A549 (cell line): ENCODE measurements at regions of chr17 and their contacts with region 1.

Region 1: DNA sequence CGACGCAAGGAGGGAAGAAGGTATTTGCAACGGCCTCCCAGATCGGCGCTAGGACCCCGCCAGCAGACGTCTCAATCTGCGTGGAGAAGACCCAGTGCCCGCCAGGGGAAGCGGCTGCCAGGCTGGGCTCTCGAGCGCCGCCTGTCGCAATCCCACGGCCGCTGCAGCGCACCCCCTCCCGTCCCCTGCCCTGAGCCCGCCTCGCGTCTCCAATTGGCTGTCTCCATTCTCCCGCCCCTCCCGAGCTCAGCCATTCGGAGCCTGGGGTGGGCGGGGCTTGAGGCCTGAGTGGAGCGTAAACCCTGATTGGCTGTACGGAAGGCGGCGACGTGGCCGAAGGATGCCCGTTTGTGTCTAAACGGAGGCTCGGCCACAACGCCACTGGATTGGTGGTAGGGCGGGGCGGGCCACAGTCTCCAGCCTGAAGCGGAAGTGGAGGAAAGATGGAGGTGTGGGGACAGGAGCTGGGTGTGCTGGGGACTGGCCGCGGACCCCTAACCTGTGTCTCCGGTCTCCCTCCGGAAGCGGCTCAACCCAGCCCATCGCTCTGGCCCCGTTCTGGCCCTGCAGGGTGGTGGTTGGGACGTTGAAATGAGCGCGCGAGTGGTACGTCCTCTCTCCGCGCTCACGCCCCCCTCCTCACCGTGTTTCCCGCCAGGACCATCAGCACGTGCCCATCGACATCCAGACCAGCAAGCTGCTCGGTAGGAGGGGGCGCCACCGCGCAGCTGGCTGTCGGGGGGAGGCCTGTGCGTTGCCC is at the start of gene CDK5RAP3:
- DNase-seq: peak; percentile 96 to 100
- ATAC-seq: peak; percentile 96 to 97
- H3K4me3 ChIP-seq: peak within 1 kb of the TSS; percentile 77
- H3K27ac ChIP-seq: peak within 1 kb of the TSS; percentile 85 to 90
- H3K4me1 ChIP-seq: peaks cover 47% of the 10 kb centered on the region
- CTCF ChIP-seq: peak; percentile 92
- EP300 ChIP-seq: no peak
- POLR2A ChIP-seq: peak; percentile 88
- RAD21 ChIP-seq: peak; percentile 74 to 89
- polyA plus RNA-seq, gene CDK5RAP3: 124 and 179 TPM in 2 replicates

Region 2: DNA sequence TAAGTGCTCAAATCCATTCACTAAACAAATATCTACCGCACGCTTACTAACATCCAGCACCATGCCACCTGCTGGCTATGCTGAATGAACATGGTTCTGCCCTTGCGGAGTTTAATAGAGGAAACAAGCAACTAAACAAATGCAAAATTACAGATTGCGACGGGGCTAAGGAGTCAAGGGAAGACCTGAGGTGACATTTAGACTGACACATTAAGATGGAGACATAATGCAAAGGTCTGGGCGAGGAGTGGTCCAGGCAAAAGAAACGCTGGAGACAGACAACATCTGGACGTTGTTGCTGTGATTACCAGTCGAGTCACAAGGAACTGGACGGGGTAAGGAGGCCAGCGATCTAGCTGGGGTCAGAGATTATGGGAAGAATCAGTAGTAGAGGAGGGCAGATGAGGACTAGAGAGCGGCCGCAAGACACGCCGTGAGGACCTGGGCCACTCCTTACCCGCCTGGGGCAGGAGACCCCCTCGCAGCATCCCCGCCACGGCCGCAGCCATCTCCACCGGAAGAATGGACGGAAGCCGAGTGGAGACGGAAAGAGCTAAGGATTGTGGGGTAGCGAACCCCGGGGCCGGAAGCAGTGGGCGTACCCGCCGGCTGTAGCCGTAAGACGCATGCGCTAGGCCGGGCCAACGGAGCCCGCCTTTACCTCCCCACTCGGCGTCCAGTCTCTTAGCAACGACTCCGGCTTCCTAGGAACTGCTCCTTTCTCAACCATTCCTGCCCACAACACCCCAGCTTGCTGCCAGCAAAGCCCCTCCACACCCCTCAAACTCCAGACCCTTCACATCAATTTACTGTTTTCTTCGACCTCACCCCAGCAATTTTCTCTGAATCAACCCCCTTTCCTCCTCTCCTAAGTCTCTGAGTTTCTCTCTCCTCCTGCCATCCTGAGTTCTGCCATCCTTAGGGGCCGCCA is 139.6 kb before region 1 on chr17 and contains the starts of genes LRRC46 and MRPL10:
- CTCF ChIA-PET with region 1: interaction called, 17 read pairs
- POLR2A ChIA-PET with region 1: interaction called, 10 read pairs
- DNase-seq: peak; percentile 94 to 99
- ATAC-seq: peak; percentile 90 to 95
- H3K4me3 ChIP-seq: peak within 1 kb of the TSS; percentile 60
- H3K27ac ChIP-seq: peak within 1 kb of the TSS; percentile 83 to 88
- H3K4me1 ChIP-seq: peaks cover 16% of the 10 kb centered on the region
- CTCF ChIP-seq: peak; percentile 55
- EP300 ChIP-seq: no peak
- POLR2A ChIP-seq: peak; percentile 96
- RAD21 ChIP-seq: no peak; a peak in 1 of 5 replicates
- polyA plus RNA-seq, gene LRRC46: 1.7 and 2.7 TPM in 2 replicates
- polyA plus RNA-seq, gene MRPL10: 97.7 and 103 TPM in 2 replicates

Region 3: DNA sequence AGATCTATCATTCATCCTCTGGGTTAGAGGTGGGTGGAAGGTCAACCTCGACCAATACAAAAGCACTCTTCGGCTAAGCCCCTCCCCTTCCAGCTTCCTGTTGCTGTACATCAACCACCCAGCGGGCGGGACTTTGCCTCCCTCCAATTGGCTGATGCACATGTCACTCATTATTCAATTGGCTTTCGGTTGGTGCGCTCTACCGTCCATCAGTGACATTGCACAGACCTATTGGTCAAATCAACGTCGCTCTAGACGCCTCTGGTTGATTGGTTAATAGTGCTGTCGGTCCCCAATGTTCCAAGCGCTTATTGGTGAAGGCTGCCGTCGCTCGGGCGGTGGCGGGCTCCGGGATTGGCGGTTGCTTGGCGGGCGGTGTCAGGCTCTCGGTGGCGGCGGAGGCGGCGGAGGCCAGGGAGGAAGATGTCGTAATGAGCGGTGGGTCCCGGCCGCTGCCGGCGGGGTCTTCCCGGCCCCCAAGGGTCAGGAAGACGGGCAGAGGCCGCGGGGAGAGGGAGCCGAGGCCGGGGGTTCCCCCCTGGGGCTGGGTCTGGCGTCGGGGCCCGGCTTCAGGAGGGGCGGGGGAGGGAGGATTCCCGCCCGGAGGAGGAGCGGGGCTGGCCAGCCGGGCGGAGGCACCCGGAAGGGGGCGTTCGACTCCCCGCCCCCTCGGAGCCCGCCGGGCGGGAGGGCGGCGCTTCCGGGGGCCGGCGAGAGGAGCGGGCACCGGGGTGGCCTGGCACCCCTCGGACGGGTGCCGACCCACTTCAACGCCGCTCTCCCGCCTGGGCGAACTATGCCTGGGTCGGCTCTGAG is 74.8 kb before region 1 on chr17 and contains the start of gene SP2:
- CTCF ChIA-PET with region 1: interaction called, 87 read pairs
- POLR2A ChIA-PET with region 1: interaction called, 29 read pairs
- DNase-seq: peak; percentile 100
- ATAC-seq: peak; percentile 88 to 95
- H3K4me3 ChIP-seq: peak within 1 kb of the TSS; percentile 86
- H3K27ac ChIP-seq: peak within 1 kb of the TSS; percentile 95 to 96
- H3K4me1 ChIP-seq: peaks cover 16% of the 10 kb centered on the region; the same call in 2 of the 3 replicates
- CTCF ChIP-seq: no peak
- EP300 ChIP-seq: no peak
- POLR2A ChIP-seq: peak; percentile 91
- RAD21 ChIP-seq: no peak
- polyA plus RNA-seq, gene SP2: 6.2 and 8.0 TPM in 2 replicates

Region 4: DNA sequence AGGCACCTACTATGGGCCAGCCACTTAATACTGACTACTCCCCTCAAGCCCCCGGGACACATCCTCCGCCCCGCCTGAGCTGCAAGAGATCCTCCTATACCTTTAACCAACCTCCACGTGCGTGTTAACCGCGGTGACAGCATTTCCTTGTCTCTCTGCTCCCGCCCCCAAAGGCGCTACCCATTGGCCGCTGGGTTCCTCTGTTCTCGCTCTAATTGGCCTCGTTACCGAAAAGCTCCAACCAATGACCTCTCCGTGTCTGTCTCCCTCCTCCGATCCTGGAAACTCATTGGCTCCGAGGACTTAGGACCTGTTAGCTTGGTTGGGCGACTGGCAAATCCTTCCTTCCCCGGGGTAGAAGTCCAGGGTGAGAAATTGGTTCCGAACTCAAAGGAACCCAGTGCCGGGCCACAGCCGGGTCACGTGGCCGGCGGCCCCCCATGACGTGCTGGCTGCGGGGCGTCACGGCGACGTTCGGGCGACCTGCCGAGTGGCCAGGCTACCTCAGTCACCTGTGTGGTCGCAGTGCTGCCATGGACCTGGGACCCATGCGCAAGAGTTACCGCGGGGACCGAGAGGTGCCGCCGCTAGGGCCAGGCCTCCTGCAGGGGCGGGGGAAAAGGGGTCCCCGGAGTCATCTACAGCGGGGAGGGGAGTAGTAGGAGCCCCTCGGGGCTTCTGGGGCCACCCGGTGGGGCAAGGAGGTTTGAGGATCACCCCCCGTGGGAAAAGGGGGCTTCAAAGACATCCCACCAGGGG is 29.5 kb before region 1 on chr17 and contains the start of gene PNPO:
- CTCF ChIA-PET with region 1: interaction called, 1,426 read pairs
- POLR2A ChIA-PET with region 1: interaction called, 8 read pairs
- DNase-seq: peak; percentile 99 to 100
- ATAC-seq: peak; percentile 97 to 100
- H3K4me3 ChIP-seq: peak within 1 kb of the TSS; percentile 71
- H3K27ac ChIP-seq: peak within 1 kb of the TSS; percentile 87 to 93
- H3K4me1 ChIP-seq: peaks cover 29% of the 10 kb centered on the region
- CTCF ChIP-seq: no peak
- EP300 ChIP-seq: no peak
- POLR2A ChIP-seq: peak; percentile 82
- RAD21 ChIP-seq: no peak
- polyA plus RNA-seq, gene PNPO: 40.8 and 43.4 TPM in 2 replicates

Region 5: GRCh38 chr17:47987240-47987835 is 16.5 kb after region 1 on chr17:
- CTCF ChIA-PET with region 1: interaction called, 174 read pairs
- POLR2A ChIA-PET with region 1: no interaction called
- DNase-seq: no peak
- ATAC-seq: peak in 1 of 2 experiments; percentile 12; a peak in 3 of 6 replicates
- H3K4me3 ChIP-seq: no peak overlapping the region
- H3K27ac ChIP-seq: no peak overlapping the region
- H3K4me1 ChIP-seq: no peaks in the 10 kb centered on the region
- CTCF ChIP-seq: no peak
- EP300 ChIP-seq: no peak
- POLR2A ChIP-seq: no peak
- RAD21 ChIP-seq: no peak

Region 6: DNA sequence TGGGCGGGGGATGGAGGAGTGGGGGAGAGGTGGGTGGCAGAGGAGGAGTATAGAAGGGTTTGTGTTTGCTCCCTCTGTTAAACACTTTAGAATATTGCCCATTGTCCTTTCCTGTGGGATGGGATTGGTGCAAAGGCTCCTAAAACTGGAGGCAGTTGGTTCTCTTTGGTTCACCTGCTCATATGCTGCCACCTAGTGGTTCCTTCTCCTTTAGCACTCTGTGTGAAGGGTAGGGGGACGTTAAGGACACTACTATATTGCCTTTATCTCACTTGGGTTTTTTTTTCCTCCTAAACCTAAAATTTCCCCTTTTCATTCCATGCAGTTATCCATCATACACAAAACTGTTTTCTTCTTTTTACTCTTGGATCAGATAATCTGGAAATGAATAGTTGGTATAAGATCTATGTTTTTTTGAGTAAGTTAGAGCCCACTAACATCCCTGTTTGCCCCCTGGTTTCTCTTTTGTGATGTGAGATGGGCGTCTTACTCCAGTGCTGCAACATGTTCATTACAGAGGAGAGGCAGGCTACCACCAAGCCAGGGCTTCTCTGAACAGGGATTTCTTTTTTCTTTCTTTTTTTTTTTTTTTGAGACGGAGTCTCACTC is 160.4 kb after region 1 on chr17:
- CTCF ChIA-PET with region 1: no interaction called
- POLR2A ChIA-PET with region 1: no interaction called
- DNase-seq: peak; percentile 79 to 87
- ATAC-seq: peak; percentile 88 to 93
- H3K4me3 ChIP-seq: no peak overlapping the region
- H3K27ac ChIP-seq: no peak overlapping the region
- H3K4me1 ChIP-seq: peaks cover 12% of the 10 kb centered on the region
- CTCF ChIP-seq: peak; percentile 98
- EP300 ChIP-seq: no peak
- POLR2A ChIP-seq: no peak
- RAD21 ChIP-seq: peak; percentile 91 to 97